ENCODE measurements at regions of chr15 and their contacts with region 1.

Region 1: DNA sequence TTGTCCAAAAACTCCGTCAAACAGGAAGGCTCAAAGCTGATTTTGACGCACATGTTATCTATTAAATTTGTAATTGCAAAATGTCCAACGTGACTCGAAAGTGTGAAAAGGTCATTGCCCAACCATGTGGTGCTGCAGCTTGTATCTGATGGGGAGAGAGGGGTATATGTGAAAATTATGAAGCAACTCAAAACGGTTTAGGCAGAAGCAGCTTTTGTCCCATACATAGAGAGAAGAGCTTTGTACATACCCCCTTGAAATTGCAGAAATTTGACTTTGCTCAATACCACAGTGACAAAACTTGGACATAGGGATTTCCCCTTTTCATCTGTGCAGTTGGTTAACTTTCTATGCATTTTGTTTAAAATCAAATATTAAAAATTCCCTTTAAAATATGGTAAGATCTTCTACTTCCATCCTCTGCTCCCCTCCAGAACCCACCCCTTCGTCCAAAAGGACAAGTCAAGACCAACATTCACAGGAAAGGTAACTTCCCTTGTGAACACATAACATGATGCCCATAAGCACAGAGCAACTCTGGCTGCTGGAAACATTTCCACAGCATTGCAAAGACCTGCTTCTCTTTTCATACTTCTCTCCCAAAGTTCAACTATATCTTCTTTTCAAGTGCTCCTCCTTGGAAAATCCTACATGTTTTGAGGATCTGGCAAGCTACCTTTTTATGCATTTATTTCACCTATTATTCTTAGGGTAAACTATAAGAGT is 253.7 kb upstream of the THBS1 start:
- DNase-seq: no peak

Region 2: DNA sequence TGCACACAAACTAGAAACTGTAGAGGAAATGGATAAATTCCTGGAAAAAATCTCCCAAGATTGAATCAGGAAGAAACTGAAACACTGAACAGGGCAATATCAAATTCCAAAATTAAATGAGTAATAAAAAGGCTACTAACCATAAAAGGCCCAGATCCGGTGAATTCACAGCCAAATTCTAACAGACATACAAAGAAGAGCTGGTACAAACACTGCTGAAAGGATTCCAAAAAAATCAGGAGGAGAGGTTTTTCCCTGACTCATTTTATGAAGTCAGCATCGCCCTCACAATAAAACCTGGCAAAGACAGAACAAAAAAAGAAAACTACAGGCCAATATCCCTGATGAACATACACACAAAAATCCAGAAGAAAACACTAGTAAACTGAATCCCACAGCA is 208.7 kb before region 1 on chr15:
- intact Hi-C with region 1: loop called (anchors 10 kb)
- DNase-seq: no peak

Region 3: DNA sequence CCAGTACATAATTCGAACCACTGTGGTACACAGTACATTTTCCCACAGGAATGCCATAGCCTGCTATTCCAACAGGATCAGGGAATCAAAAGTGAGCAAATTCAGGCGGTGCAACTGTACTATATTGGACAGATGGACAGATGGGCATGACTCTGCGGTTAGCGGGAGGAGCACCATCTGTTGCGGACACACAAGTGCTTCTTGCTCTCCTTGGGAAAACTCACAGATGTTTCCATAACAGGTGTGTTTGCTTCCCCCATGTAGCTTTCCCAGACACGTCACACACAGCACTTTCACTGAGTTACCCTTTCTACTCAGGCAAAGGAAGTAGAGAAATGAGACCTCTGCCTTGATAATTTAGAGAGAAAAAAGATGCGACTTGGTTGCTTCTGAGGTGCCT is 71.4 kb before region 1 on chr15:
- intact Hi-C with region 1: no loop called
- DNase-seq: no peak